HepG2 (cell line): ENCODE measurements at regions of chr3 and their contacts with region 1.

Region 1: DNA sequence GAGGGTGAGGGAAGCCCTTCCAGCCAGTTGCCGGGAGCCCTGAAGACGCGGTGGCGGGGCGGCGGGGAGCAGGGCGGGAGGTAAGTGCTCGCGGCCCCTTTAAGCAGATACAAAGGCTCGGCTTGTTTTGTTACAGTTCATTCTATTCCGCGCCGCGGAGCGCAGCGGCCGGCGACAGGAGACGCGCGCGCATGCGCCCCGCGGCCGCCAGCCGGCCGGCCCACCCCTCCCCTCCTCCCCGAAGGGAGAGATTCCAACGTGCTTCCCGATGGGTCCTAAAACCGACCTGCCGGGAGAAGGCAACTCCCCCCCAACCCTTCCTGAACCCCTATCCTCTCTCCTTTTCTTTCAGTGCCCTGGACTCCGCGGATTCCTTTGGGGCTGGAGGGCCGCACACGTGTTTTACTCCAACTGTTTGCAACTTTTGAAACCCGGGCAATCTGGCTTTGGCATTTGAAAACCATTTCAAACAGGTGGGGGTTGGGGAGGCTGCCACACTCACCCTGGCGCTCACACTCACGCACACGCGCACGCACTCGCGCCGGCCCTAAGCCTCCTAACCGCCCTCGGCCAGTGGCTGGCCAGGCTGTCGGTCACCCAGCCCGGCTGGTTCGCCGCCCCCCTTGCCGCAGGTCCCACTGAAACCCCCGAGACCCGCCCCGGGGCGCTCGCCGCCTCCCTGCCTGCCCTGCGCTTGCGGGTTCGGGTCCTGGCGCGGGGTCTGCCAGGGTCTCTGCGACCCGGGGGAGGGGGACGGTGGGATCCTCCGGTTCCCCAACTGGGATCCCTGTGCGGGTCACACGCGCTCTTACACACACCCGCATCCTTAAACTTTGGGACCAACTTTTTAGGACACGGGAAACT is at the start of gene MAGI1:
- DNase-seq: peak; percentile 90
- ATAC-seq: peak; percentile 87
- H3K4me3 ChIP-seq: peak within 1 kb of the TSS; percentile 85 to 97 (median 92)
- H3K27ac ChIP-seq: peak within 1 kb of the TSS; percentile 98
- H3K4me1 ChIP-seq: peaks cover 54% of the 10 kb centered on the region
- H3K27me3 ChIP-seq: no peaks in the 10 kb centered on the region; a peak in 1 of 5 replicates
- CTCF ChIP-seq: no peak; the same call in 1 of the 2 replicates
- EP300 ChIP-seq: no peak
- POLR2A ChIP-seq: peak; percentile 32 to 39; a peak in 2 of 4 replicates
- RAD21 ChIP-seq: no peak
- total RNA-seq, gene MAGI1: 25.3 and 26.0 TPM in 2 replicates

Region 2: DNA sequence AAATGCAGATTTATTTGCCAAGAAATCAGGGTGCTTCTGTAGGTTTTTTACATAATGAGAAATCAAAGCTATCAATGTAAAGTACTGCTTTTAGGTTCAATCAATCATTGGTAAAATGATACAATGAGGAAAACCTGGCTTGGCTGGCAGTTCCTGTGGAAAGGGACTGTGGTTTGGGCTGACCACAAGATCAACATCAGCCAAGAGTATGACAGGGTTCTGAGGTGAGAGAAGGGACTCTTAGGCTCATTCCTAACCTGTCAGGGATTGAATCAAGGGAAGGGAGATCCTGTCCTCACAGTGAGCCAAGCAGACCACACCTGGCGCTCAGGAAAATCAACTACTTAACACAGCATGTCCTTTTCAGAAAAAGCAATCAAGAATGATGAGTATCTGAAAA is 111.4 kb before region 1 on chr3:
- CTCF ChIA-PET with region 1: no interaction called
- POLR2A ChIA-PET with region 1: no interaction called
- in situ Hi-C with region 1: no loop called
- intact Hi-C with region 1: loop called (anchors 10 kb)
- DNase-seq: peak; percentile 46
- ATAC-seq: peak; percentile 43
- H3K4me3 ChIP-seq: no peak overlapping the region
- H3K27ac ChIP-seq: peak overlapping the region; percentile 20
- H3K4me1 ChIP-seq: peaks cover 70% of the 10 kb centered on the region
- H3K27me3 ChIP-seq: no peaks in the 10 kb centered on the region
- CTCF ChIP-seq: no peak
- EP300 ChIP-seq: no peak
- POLR2A ChIP-seq: no peak
- RAD21 ChIP-seq: no peak

Region 3: GRCh38 chr3:65953301-65953812 is 85.6 kb before region 1 on chr3:
- CTCF ChIA-PET with region 1: no interaction called
- POLR2A ChIA-PET with region 1: interaction called, 7 read pairs
- in situ Hi-C with region 1: no loop called
- intact Hi-C with region 1: loop called (anchors 2 kb)
- DNase-seq: peak; percentile 84
- ATAC-seq: peak; percentile 62
- H3K4me3 ChIP-seq: peak overlapping the region; percentile 1 to 59 (median 45); a peak in 4 of 6 replicates
- H3K27ac ChIP-seq: peak overlapping the region; percentile 78
- H3K4me1 ChIP-seq: peaks cover 97% of the 10 kb centered on the region
- H3K27me3 ChIP-seq: no peaks in the 10 kb centered on the region
- CTCF ChIP-seq: no peak
- EP300 ChIP-seq: no peak
- POLR2A ChIP-seq: peak in 1 of 2 experiments; percentile 36; a peak in 1 of 4 replicates
- RAD21 ChIP-seq: no peak

Region 4: DNA sequence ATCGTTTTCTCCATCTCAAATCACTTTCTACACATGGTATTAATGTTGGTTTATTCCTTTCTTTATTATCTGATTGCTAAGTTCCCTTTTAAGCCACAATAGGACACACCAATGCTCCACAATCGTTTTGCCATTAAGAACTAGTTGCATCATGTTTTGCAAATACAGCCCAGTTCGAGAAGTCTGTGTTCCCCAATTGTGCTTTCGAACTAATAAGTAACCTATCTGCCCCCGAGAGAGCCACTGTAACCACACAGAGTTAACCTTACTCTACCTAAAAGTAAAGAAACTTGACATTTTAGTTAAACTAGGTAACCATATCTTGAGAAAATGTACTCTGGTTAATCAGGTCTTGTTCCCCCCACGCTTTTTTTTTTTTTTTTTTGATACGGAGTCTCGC is 39.4 kb before region 1 on chr3:
- CTCF ChIA-PET with region 1: no interaction called
- POLR2A ChIA-PET with region 1: interaction called, 8 read pairs
- in situ Hi-C with region 1: no loop called
- intact Hi-C with region 1: loop called (anchors 5 kb)
- DNase-seq: peak; percentile 73
- ATAC-seq: peak; percentile 93
- H3K4me3 ChIP-seq: peak overlapping the region; percentile 41 to 66 (median 43)
- H3K27ac ChIP-seq: peak overlapping the region; percentile 54
- H3K4me1 ChIP-seq: peaks cover 44% of the 10 kb centered on the region
- H3K27me3 ChIP-seq: no peaks in the 10 kb centered on the region
- CTCF ChIP-seq: no peak
- EP300 ChIP-seq: no peak
- POLR2A ChIP-seq: no peak
- RAD21 ChIP-seq: no peak